ENCODE measurements at regions of chr2 and their contacts with region 1.

Region 1: DNA sequence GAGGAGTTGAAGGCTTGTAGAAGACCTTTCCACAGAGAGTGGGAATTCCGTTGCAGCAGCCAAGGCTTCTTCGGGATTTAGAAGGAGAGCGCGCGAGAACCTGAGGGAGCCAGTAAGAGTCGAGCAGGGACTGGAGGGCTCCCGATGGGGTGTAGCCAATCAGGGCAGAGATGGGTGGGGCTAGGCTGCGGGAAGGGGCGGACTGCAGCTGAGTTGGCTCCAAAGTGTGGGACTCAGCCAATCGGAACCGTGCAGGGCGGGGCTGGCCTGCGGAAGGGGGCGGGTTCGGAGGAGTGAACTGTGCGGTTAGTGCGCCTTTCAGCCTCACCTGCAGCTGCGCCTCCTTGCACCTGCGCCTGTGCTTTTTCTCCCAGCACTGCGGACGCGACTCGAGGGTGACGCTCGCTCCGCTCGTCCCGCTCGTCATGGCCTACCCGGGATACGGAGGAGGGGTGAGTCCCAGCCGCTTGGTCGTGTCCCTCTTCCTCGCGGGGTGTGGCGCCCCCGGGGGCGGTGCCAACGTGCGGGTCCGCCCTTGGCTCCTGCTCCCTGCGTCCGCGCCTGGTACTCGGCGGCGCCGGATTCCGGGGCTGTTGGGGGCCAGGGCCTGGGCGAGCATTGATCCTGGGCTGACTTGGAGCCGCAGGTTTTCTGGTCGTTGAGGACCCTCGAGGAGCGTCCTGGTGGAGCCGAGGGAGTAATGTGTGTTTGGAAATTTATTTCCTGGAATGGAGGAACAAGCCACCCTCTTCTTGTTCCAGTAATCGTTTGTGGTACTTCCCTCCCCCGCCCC is at the start of gene GCA:
- DNase-seq: peak; percentile 95 to 98 (median 98)
- ATAC-seq: peak; percentile 98
- H3K4me3 ChIP-seq: peak within 1 kb of the TSS; percentile 71 to 81
- H3K4me3 Mint-ChIP-seq: peak within 1 kb of the TSS; percentile 91
- H3K27ac ChIP-seq: peak within 1 kb of the TSS in 1 of 2 experiments; percentile 34
- H3K27ac Mint-ChIP-seq: peak within 1 kb of the TSS; percentile 80
- H3K4me1 ChIP-seq: peaks cover 8% of the 10 kb centered on the region
- H3K4me1 Mint-ChIP-seq: peaks cover 17% of the 10 kb centered on the region
- H3K27me3 ChIP-seq: no peaks in the 10 kb centered on the region
- H3K27me3 Mint-ChIP-seq: no peaks in the 10 kb centered on the region
- CTCF ChIP-seq: no peak
- total RNA-seq, gene GCA: 3.2 to 4.0 TPM

Region 2: DNA sequence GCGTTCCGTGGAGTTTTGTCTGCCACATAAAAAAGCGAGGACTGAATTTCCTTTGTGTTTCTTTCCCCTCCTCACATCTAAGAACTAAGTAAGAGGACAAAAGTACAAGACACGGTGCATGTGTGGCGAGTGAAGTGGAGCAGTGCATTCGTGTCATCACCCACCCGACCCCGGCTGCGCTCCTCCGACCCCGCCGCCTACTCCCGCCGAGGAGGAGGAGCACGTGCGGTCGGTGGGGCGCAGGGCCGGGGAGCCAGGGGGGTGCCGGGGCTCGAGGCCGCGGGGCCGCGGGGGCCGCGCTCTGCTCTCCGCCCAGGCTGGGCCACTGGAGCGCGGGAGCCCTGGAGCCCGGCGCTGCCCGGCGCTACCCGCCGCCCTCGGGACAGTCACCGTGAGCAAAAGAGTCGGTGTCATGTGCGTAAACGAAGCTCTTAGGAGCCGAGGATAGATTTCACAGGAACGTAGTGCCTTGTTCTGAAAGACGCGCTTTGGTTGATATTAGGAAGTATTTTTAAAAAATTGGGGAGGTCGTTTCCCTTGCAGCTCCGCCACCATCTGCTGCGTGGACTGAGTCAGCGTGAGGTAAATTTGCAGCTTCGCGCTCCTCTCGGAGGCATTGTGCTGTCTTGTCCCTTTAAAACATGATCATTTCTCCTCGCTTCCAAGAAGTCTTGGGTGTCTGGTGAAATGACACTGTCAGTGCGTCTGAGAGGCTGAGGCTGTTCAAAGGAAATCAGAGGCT is 916.9 kb before region 1 on chr2:
- CTCF ChIA-PET with region 1: no interaction called
- POLR2A ChIA-PET with region 1: no interaction called
- intact Hi-C with region 1: loop called in 1 of 2 experiments (anchors 10 kb)
- DNase-seq: peak in 1 of 9 experiments; percentile 27
- ATAC-seq: peak; percentile 32
- H3K4me3 ChIP-seq: no peak overlapping the region
- H3K4me3 Mint-ChIP-seq: peak overlapping the region; percentile 69
- H3K27ac ChIP-seq: no peak overlapping the region
- H3K27ac Mint-ChIP-seq: no peak overlapping the region
- H3K4me1 ChIP-seq: peaks cover 18% of the 10 kb centered on the region
- H3K4me1 Mint-ChIP-seq: peaks cover 29% of the 10 kb centered on the region
- H3K27me3 ChIP-seq: peaks cover 34 to 52% of the 10 kb centered on the region in 2 experiments
- H3K27me3 Mint-ChIP-seq: peaks cover 82% of the 10 kb centered on the region
- CTCF ChIP-seq: no peak

Region 3: GRCh38 chr2:161825429-161825828 is 518.6 kb before region 1 on chr2:
- CTCF ChIA-PET with region 1: no interaction called
- POLR2A ChIA-PET with region 1: no interaction called
- intact Hi-C with region 1: no loop called
- DNase-seq: no peak
- ATAC-seq: no peak
- H3K4me3 ChIP-seq: no peak overlapping the region
- H3K4me3 Mint-ChIP-seq: no peak overlapping the region
- H3K27ac ChIP-seq: no peak overlapping the region
- H3K27ac Mint-ChIP-seq: no peak overlapping the region
- H3K4me1 ChIP-seq: no peaks in the 10 kb centered on the region
- H3K4me1 Mint-ChIP-seq: no peaks in the 10 kb centered on the region
- H3K27me3 ChIP-seq: no peaks in the 10 kb centered on the region
- H3K27me3 Mint-ChIP-seq: peaks cover 3% of the 10 kb centered on the region
- CTCF ChIP-seq: no peak

Region 4: GRCh38 chr2:162318328-162319180 is 25.5 kb before region 1 on chr2 and contains the start of gene IFIH1:
- CTCF ChIA-PET with region 1: no interaction called
- POLR2A ChIA-PET with region 1: interaction called, 6 read pairs
- intact Hi-C with region 1: loop called (anchors 1 kb)
- DNase-seq: peak; percentile 40 to 94 (median 68)
- ATAC-seq: peak; percentile 82
- H3K4me3 ChIP-seq: peak within 1 kb of the TSS; percentile 64 to 76
- H3K4me3 Mint-ChIP-seq: peak within 1 kb of the TSS; percentile 97
- H3K27ac ChIP-seq: peak within 1 kb of the TSS; percentile 92 to 95
- H3K27ac Mint-ChIP-seq: peak within 1 kb of the TSS; percentile 99
- H3K4me1 ChIP-seq: peaks cover 45% of the 10 kb centered on the region
- H3K4me1 Mint-ChIP-seq: peaks cover 65% of the 10 kb centered on the region
- H3K27me3 ChIP-seq: no peaks in the 10 kb centered on the region
- H3K27me3 Mint-ChIP-seq: no peaks in the 10 kb centered on the region
- CTCF ChIP-seq: no peak
- total RNA-seq, gene IFIH1: 30.8 to 32.5 TPM